Gastrocnemius medialis (tissue), 4 donors: ENCODE measurements at regions of chr5 and their contacts with region 1.

Region 1: DNA sequence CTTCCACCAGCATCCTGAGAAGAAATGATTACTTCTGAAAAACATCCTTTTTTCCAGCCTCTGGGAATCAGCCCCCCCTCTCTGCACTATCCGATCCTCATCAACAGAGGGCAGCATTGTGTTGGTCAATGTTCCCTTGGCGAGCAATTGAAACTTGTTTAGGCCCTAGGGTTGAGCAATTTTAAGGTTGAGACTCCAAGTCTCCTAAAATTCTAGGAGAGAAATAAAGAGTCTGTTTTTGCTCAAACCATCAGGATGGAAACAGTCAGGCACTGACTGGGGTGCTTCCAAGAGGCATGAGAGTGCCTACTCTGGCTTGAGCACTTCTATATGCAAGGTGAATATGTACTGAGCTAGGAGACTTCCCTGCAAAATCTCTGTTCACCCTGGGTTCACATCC is 12.4 kb upstream of the CYFIP2 start:
- DNase-seq: peak in 1 of 2 donors; percentile 12
- ATAC-seq: peak; percentile 82 to 88
- H3K4me3 ChIP-seq: no peak overlapping the region
- H3K27ac ChIP-seq: no peak overlapping the region
- H3K4me1 ChIP-seq: no peaks in the 10 kb centered on the region
- H3K27me3 ChIP-seq: no peaks in the 10 kb centered on the region
- CTCF ChIP-seq: peak; percentile 32 to 75 (median 69)
- POLR2A ChIP-seq: no peak

Region 2: GRCh38 chr5:157046041-157046440 is 207.5 kb before region 1 on chr5:
- in situ Hi-C with region 1: no loop called
- intact Hi-C with region 1: no loop called
- DNase-seq: no peak
- ATAC-seq: no peak
- H3K4me3 ChIP-seq: no peak overlapping the region
- H3K27ac ChIP-seq: no peak overlapping the region
- H3K4me1 ChIP-seq: no peaks in the 10 kb centered on the region
- H3K27me3 ChIP-seq: no peaks in the 10 kb centered on the region
- CTCF ChIP-seq: no peak
- POLR2A ChIP-seq: no peak

Region 3: DNA sequence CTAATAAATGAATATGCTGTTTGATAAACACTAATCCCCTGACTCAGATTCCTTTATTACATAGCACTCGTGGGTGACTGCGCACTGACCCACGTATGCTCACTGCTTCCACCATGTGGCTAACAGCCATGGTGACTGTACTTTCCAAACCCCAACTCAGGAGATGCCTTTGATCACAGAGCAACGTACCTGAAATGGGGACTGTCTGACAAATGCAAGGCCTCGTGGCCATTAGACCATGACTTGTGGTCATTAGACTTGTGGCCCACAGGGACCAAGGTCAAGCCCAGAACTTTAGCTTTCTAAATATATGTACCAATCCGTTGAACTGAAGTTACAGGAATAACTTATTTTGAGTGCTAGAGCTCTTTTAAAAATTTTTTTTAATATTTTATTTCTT is 58.9 kb after region 1 on chr5:
- in situ Hi-C with region 1: loop called in 1 of 4 experiments (anchors 5 kb)
- intact Hi-C with region 1: loop called (anchors 1 kb)
- DNase-seq: no peak
- ATAC-seq: peak; percentile 23 to 61
- H3K4me3 ChIP-seq: no peak overlapping the region
- H3K27ac ChIP-seq: no peak overlapping the region
- H3K4me1 ChIP-seq: no peaks in the 10 kb centered on the region
- H3K27me3 ChIP-seq: no peaks in the 10 kb centered on the region
- CTCF ChIP-seq: peak in 4 of 5 experiments; percentile 3 to 57 (median 44)
- POLR2A ChIP-seq: no peak

Region 4: GRCh38 chr5:157761690-157762621 is 508.4 kb after region 1 on chr5:
- in situ Hi-C with region 1: no loop called
- intact Hi-C with region 1: no loop called
- DNase-seq: no peak
- ATAC-seq: peak; percentile 86 to 94
- H3K4me3 ChIP-seq: no peak overlapping the region
- H3K27ac ChIP-seq: no peak overlapping the region
- H3K4me1 ChIP-seq: no peaks in the 10 kb centered on the region
- H3K27me3 ChIP-seq: no peaks in the 10 kb centered on the region
- CTCF ChIP-seq: peak; percentile 53 to 73 (median 62)
- POLR2A ChIP-seq: no peak